Left lung (tissue), 14 donors: ENCODE measurements at regions of chr9 and their contacts with region 1.

Region 1: GRCh38 chr9:95127249-95128176 is 190.0 kb downstream of the FANCC start:
- DNase-seq: peak; percentile 65 to 94 (median 86)
- ATAC-seq: peak; percentile 93
- H3K4me3 ChIP-seq: peak overlapping the region in 1 of 2 donors; percentile 7
- H3K27ac ChIP-seq: no peak overlapping the region
- H3K4me1 ChIP-seq: peaks cover 7 to 11% of the 10 kb centered on the region in 2 donors
- H3K27me3 ChIP-seq: no peaks in the 10 kb centered on the region
- CTCF ChIP-seq: peak; percentile 91 to 96

Region 2: DNA sequence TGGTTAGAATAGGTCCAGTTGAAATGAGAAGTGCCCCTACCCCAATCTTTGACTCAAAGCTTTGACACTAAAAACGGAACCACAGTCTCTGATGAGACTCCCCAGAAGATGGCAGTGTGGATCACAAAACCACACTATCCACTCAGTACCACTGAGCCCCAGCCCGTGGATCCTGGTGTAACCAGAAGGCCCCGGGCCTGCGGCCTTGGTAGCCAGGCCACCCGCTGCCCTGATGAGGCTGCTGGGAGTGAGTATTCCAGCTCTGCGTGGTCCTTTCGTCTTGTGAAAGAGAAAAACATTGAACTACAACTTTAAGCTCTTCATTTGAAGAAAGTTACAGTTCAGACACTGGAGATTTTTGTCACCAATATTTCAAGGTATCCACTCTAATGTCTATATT is 446.0 kb before region 1 on chr9:
- intact Hi-C with region 1: loop called (anchors 5 to 10 kb)
- DNase-seq: peak in 3 of 4 donors; percentile 66 to 84 (median 76)
- ATAC-seq: peak; percentile 100
- H3K4me3 ChIP-seq: no peak overlapping the region
- H3K27ac ChIP-seq: no peak overlapping the region
- H3K4me1 ChIP-seq: no peaks in the 10 kb centered on the region
- H3K27me3 ChIP-seq: no peaks in the 10 kb centered on the region
- CTCF ChIP-seq: peak; percentile 61 to 70

Region 3: DNA sequence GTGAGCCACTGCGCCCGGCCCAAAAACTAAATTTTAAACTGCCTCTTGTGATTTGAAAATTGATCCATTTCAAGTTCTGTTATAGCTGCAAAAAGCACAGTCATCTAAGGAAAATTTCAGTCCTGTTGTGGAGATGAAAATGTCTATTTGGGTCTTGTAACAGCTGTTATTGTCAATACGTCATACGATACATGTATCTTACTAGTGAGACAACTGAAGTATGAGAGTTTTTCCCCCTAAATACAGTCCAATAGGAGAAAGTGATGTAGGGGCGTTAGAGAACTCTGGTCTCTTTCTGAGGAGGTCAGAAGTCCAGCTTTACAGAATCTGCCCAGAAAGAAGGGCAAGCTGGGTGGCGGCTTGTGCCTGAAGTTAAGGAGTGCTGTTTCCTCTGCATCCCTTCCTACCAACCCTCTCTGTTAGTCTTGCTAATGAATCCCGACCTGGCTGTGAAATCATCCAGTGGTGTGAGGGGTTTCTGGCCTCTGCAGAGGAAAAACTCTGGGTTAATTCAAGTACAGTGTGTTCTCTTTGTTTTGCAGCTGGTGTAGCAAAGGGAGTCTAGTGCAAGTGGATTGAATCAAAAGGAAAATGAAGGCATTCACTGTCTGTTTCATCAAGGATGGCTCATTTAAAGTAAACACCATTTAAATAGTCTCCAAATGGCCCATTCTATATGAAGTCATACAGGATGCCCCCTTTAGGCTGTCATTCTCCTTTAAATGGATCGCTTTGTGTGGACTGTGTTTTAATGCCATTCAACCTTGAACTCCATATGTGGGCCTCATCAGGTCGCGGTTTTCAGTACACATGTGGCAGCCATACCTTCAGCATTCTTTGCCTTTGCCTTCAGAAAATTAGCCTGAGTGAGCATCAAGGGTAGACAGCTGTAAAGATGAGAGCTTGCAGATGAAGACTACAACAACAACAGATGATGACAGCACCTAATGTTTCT is 342.0 kb before region 1 on chr9:
- intact Hi-C with region 1: loop called in 1 of 2 experiments (anchors 5 kb)
- DNase-seq: no peak
- ATAC-seq: no peak
- H3K4me3 ChIP-seq: no peak overlapping the region
- H3K27ac ChIP-seq: no peak overlapping the region
- H3K4me1 ChIP-seq: peaks cover 4 to 8% of the 10 kb centered on the region in 2 donors
- H3K27me3 ChIP-seq: no peaks in the 10 kb centered on the region
- CTCF ChIP-seq: no peak